ENCODE measurements at regions of chr3 and their contacts with region 1.

Region 1: GRCh38 chr3:100665230-100665629 is 44.1 kb upstream of the TFG start:
- DNase-seq: peak; percentile 3
- ATAC-seq: peak; percentile 70
- H3K4me3 ChIP-seq: no peak overlapping the region
- H3K27ac ChIP-seq: no peak overlapping the region
- H3K4me1 ChIP-seq: no peaks in the 10 kb centered on the region
- H3K27me3 ChIP-seq: no peaks in the 10 kb centered on the region
- CTCF ChIP-seq: no peak
- EP300 ChIP-seq: no peak
- POLR2A ChIP-seq: no peak
- RAD21 ChIP-seq: no peak

Region 2: DNA sequence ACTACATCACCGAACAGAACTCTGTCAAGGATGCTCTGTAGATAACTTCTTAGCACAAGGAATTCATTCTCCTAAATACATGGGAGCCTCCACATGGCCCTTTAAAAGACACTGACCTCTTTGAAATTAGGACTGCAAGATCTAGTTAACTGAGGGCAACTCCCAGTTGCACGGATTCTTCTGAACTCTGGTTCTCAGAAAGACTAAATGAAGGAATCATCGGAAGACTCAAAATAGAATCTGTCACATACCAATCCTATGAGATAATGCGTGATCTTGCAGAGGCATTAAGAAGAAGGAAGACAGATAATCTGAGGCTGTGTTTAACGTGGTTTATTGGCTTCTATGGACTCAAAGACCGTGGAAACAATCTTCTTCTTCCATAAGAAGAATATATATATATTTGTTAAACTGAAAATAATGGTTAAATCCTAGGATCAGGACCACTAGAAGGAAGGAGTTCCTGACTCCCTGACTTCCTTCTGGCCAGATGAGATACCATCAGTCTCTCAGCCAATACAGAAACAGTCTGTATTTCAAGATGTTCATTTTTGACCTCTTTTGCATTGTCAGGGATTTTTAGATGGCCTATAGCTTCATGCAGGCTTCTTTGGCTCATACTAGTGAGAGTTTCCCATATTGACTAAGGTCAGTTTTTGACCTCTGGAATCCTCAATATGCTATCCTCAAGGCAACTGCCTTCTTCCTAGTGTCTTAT is 438.4 kb before region 1 on chr3:
- CTCF ChIA-PET with region 1: no interaction called
- POLR2A ChIA-PET with region 1: no interaction called
- RAD21 ChIA-PET with region 1: no interaction called
- SMC1A ChIA-PET with region 1: no interaction called
- in situ Hi-C with region 1: no loop called
- intact Hi-C with region 1: no loop called
- DNase-seq: no peak
- ATAC-seq: no peak
- H3K4me3 ChIP-seq: no peak overlapping the region
- H3K27ac ChIP-seq: no peak overlapping the region
- H3K4me1 ChIP-seq: no peaks in the 10 kb centered on the region
- H3K27me3 ChIP-seq: no peaks in the 10 kb centered on the region
- CTCF ChIP-seq: no peak
- EP300 ChIP-seq: no peak
- POLR2A ChIP-seq: no peak
- RAD21 ChIP-seq: no peak

Region 3: GRCh38 chr3:100682056-100682853 is 17.0 kb after region 1 on chr3:
- CTCF ChIA-PET with region 1: no interaction called
- POLR2A ChIA-PET with region 1: no interaction called
- RAD21 ChIA-PET with region 1: no interaction called
- SMC1A ChIA-PET with region 1: interaction called, 11 read pairs
- in situ Hi-C with region 1: no loop called
- intact Hi-C with region 1: no loop called
- DNase-seq: no peak
- ATAC-seq: peak; percentile 76
- H3K4me3 ChIP-seq: no peak overlapping the region
- H3K27ac ChIP-seq: no peak overlapping the region
- H3K4me1 ChIP-seq: no peaks in the 10 kb centered on the region
- H3K27me3 ChIP-seq: no peaks in the 10 kb centered on the region
- CTCF ChIP-seq: no peak
- EP300 ChIP-seq: no peak
- POLR2A ChIP-seq: no peak
- RAD21 ChIP-seq: no peak

Region 4: GRCh38 chr3:100844063-100844936 is 179.1 kb after region 1 on chr3:
- CTCF ChIA-PET with region 1: no interaction called
- POLR2A ChIA-PET with region 1: no interaction called
- RAD21 ChIA-PET with region 1: no interaction called
- SMC1A ChIA-PET with region 1: no interaction called
- in situ Hi-C with region 1: no loop called
- intact Hi-C with region 1: no loop called
- DNase-seq: no peak
- ATAC-seq: no peak
- H3K4me3 ChIP-seq: no peak overlapping the region
- H3K27ac ChIP-seq: no peak overlapping the region
- H3K4me1 ChIP-seq: no peaks in the 10 kb centered on the region
- H3K27me3 ChIP-seq: no peaks in the 10 kb centered on the region; a peak in 1 of 4 replicates
- CTCF ChIP-seq: no peak
- EP300 ChIP-seq: no peak
- POLR2A ChIP-seq: no peak
- RAD21 ChIP-seq: no peak

Region 5: DNA sequence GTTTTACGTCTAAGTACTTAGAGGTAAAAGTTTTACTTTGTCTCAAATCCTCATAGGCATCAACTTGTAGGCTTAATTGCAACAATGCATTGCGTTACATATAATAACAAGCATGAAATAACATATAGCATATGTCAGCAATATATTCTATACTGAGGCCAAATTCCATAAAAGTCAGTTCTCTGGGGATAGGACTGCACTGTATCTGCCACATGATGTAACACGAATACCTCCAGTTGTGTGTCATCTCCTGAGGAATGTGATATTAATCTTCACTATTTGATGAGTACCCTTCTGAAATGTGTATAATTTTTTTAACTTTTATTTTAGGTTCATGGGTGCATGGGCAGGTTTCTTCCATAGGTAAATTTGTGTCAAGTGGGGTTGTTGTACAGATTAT is 528.7 kb after region 1 on chr3:
- CTCF ChIA-PET with region 1: no interaction called
- POLR2A ChIA-PET with region 1: no interaction called
- RAD21 ChIA-PET with region 1: no interaction called
- SMC1A ChIA-PET with region 1: no interaction called
- in situ Hi-C with region 1: no loop called
- intact Hi-C with region 1: no loop called
- DNase-seq: no peak
- ATAC-seq: no peak
- H3K4me3 ChIP-seq: no peak overlapping the region
- H3K27ac ChIP-seq: no peak overlapping the region
- H3K4me1 ChIP-seq: no peaks in the 10 kb centered on the region
- H3K27me3 ChIP-seq: no peaks in the 10 kb centered on the region
- CTCF ChIP-seq: no peak
- EP300 ChIP-seq: no peak
- POLR2A ChIP-seq: no peak
- RAD21 ChIP-seq: no peak

Measured in GM12878 (cell line).